CD8-positive, alpha-beta memory T cell (primary cell): ENCODE measurements at regions of chr19 and their contacts with region 1.

Region 1: GRCh38 chr19:19170053-19170872 is at the start of gene MEF2B:
- DNase-seq: peak; percentile 51 to 80 (median 63)
- H3K4me3 ChIP-seq: peak within 1 kb of the TSS; percentile 36
- H3K4me3 Mint-ChIP-seq: peak within 1 kb of the TSS in 6 of 7 donors; percentile 52 to 90 (median 65)
- H3K27ac ChIP-seq: no peak within 1 kb of the TSS
- H3K27ac Mint-ChIP-seq: peak within 1 kb of the TSS in 3 of 8 donors; percentile 22 to 64 (median 36)
- H3K4me1 ChIP-seq: peaks cover 8% of the 10 kb centered on the region
- H3K4me1 Mint-ChIP-seq: peaks cover 14 to 20% (median 15%) of the 10 kb centered on the region in 3 donors
- H3K27me3 ChIP-seq: no peaks in the 10 kb centered on the region
- H3K27me3 Mint-ChIP-seq: peaks cover 3 to 8% of the 10 kb centered on the region in 2 donors
- total RNA-seq, gene MEF2B: 1.5 to 2.0 TPM

Region 2: GRCh38 chr19:19053508-19054314 is 116.6 kb before region 1 on chr19:
- CTCF ChIA-PET with region 1: interaction called, 11 read pairs
- POLR2A ChIA-PET with region 1: no interaction called
- DNase-seq: peak; percentile 53 to 76 (median 64)
- H3K4me3 ChIP-seq: no peak overlapping the region
- H3K4me3 Mint-ChIP-seq: no peak overlapping the region
- H3K27ac ChIP-seq: no peak overlapping the region
- H3K27ac Mint-ChIP-seq: no peak overlapping the region
- H3K4me1 ChIP-seq: no peaks in the 10 kb centered on the region
- H3K4me1 Mint-ChIP-seq: no peaks in the 10 kb centered on the region
- H3K27me3 ChIP-seq: no peaks in the 10 kb centered on the region
- H3K27me3 Mint-ChIP-seq: no peaks in the 10 kb centered on the region

Region 3: GRCh38 chr19:19145684-19146608 is 24.3 kb before region 1 on chr19:
- CTCF ChIA-PET with region 1: interaction called, 11 read pairs
- POLR2A ChIA-PET with region 1: no interaction called
- DNase-seq: peak; percentile 73 to 87 (median 79)
- H3K4me3 ChIP-seq: no peak overlapping the region
- H3K4me3 Mint-ChIP-seq: no peak overlapping the region
- H3K27ac ChIP-seq: no peak overlapping the region
- H3K27ac Mint-ChIP-seq: no peak overlapping the region
- H3K4me1 ChIP-seq: no peaks in the 10 kb centered on the region
- H3K4me1 Mint-ChIP-seq: no peaks in the 10 kb centered on the region
- H3K27me3 ChIP-seq: no peaks in the 10 kb centered on the region
- H3K27me3 Mint-ChIP-seq: no peaks in the 10 kb centered on the region